ENCODE measurements at regions of chr7 and their contacts with region 1.

Region 1: DNA sequence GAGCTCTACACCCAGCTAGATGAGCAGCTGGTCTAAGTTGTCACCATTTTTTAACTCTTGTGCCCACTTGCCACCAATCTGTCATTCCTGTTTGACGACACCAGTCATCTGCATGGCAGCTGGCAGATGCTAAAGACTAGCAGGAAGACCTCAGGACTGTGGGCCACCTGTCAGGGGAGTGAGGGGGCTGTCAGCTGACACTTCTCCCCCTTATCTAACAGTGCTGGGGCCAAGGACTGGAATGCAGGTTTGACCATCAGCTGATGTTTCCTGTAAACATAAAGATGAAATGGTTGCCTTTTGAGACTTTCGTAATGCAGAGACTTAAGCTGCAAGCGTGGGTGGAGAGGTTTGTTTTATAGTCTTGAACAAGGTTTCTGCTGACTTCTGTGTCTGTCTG is 93.5 kb downstream of the WNT2 start:
- DNase-seq: no peak
- ATAC-seq: no peak

Region 2: DNA sequence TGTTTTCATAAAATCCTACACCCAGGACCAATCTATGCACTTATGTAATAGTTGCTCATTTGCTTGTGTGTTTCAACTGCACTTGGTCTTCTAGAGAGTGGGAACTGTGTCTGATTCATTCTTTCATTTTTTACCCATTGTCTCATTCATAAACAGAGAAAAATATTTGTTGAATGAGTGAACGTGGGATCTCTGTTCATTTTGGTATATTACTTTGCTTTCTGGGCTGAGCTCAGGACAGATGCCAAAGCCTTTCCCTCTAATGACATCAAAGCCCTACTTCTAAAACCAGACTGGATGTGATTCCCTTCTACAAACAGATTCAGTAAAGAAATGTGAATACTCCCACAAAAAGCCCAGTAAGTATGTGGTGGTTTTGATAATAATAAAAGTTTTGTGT is 130.9 kb before region 1 on chr7:
- intact Hi-C with region 1: no loop called
- DNase-seq: no peak
- ATAC-seq: no peak

Region 3: GRCh38 chr7:117375380-117375779 is 146.0 kb after region 1 on chr7:
- intact Hi-C with region 1: loop called (anchors 10 kb)
- DNase-seq: no peak
- ATAC-seq: no peak

Measured in Right ventricle myocardium superior (tissue), 1 donor.